Head of caudate nucleus (tissue), 42 donors: ENCODE measurements at regions of chr2 and their contacts with region 1.

Region 1: GRCh38 chr2:29196792-29197788 is 81.9 kb downstream of the CLIP4 start:
- DNase-seq: peak; percentile 48 to 92 (median 82)

Region 2: GRCh38 chr2:28956415-28956826 is 240.7 kb before region 1 on chr2:
- intact Hi-C with region 1: loop called (anchors 2 kb)
- DNase-seq: peak in 41 of 42 donors; percentile 30 to 80 (median 64)

Region 3: GRCh38 chr2:29063646-29064343 is 133.3 kb before region 1 on chr2:
- intact Hi-C with region 1: loop called (anchors 10 kb)
- DNase-seq: peak in 4 of 42 donors; percentile 33 to 53 (median 42)